ENCODE measurements at regions of chr12 and their contacts with region 1.

Region 1: DNA sequence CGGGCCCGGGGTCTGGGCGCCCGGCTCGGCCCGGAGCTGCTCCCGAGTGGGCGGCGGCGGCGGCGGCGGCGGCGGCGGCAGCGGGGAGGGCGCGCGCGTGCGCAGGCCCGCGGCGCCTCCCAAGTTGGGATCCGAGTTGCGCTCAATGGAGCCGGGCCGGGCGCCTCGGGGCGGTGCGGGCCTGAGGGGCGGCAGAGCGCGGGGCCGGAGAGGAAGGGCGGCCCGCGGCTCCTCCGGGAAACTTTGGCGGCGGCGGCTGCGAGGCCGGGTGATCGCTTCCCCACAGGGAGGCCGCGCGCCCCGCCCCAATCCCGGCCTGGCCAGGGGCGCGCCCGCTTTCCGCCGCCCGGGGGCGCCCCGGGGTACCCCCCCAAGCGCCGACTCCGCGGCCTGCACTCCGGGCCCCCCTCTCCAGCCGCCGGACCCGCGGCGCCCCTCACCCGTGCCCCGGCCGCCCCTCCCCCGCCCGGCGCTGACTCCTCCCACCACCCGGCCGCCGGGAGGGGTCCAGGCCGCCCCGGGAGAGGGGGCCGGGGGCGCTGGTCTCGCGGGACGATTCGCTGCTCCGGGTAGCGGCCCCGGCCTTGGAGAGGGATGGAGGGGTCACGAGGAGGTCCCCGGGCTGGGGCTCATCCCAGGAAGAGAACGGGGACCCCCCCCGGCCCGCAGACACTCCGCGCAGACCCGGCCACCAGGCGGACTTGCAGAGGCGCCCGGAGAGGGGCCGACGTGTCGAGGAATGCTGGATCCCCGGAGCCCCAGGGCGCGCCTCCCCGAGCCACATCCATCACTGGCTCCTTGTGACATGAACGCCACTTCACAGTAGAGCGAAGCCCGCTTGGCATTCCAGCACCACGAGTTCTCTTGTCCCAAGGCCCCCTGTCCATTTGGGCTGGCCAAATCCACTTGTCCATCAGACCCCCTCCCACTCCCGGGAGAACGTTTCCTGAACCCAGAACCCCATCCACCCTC is at the start of gene RILPL1:
- DNase-seq: peak; percentile 7 to 71 (median 43)
- ATAC-seq: peak; percentile 82
- H3K4me3 ChIP-seq: peak within 1 kb of the TSS; percentile 61 to 68
- H3K4me3 Mint-ChIP-seq: peak within 1 kb of the TSS; percentile 89
- H3K27ac ChIP-seq: no peak within 1 kb of the TSS
- H3K27ac Mint-ChIP-seq: peak within 1 kb of the TSS; percentile 74
- H3K4me1 ChIP-seq: peaks cover 19% of the 10 kb centered on the region
- H3K4me1 Mint-ChIP-seq: peaks cover 17% of the 10 kb centered on the region
- H3K27me3 ChIP-seq: no peaks in the 10 kb centered on the region
- H3K27me3 Mint-ChIP-seq: no peaks in the 10 kb centered on the region
- CTCF ChIP-seq: peak; percentile 27
- total RNA-seq, gene RILPL1: 3.1 to 3.4 TPM

Region 2: GRCh38 chr12:123436017-123436964 is 97.7 kb before region 1 on chr12 and contains the start of gene RILPL2:
- CTCF ChIA-PET with region 1: no interaction called
- POLR2A ChIA-PET with region 1: no interaction called
- intact Hi-C with region 1: loop called in 1 of 2 experiments (anchors 5 kb)
- DNase-seq: peak; percentile 77 to 95 (median 90)
- ATAC-seq: peak; percentile 89
- H3K4me3 ChIP-seq: peak within 1 kb of the TSS; percentile 84 to 97
- H3K4me3 Mint-ChIP-seq: peak within 1 kb of the TSS; percentile 93
- H3K27ac ChIP-seq: peak within 1 kb of the TSS; percentile 60 to 93
- H3K27ac Mint-ChIP-seq: peak within 1 kb of the TSS; percentile 90
- H3K4me1 ChIP-seq: peaks cover 35% of the 10 kb centered on the region
- H3K4me1 Mint-ChIP-seq: peaks cover 38% of the 10 kb centered on the region
- H3K27me3 ChIP-seq: no peaks in the 10 kb centered on the region
- H3K27me3 Mint-ChIP-seq: no peaks in the 10 kb centered on the region
- CTCF ChIP-seq: no peak
- total RNA-seq, gene RILPL2: 3.4 to 3.6 TPM

Region 3: GRCh38 chr12:123854918-123855317 is 321.0 kb after region 1 on chr12:
- CTCF ChIA-PET with region 1: no interaction called
- POLR2A ChIA-PET with region 1: no interaction called
- intact Hi-C with region 1: no loop called
- DNase-seq: no peak
- ATAC-seq: no peak
- H3K4me3 ChIP-seq: no peak overlapping the region
- H3K4me3 Mint-ChIP-seq: no peak overlapping the region
- H3K27ac ChIP-seq: no peak overlapping the region
- H3K27ac Mint-ChIP-seq: no peak overlapping the region
- H3K4me1 ChIP-seq: no peaks in the 10 kb centered on the region
- H3K4me1 Mint-ChIP-seq: no peaks in the 10 kb centered on the region
- H3K27me3 ChIP-seq: no peaks in the 10 kb centered on the region
- H3K27me3 Mint-ChIP-seq: no peaks in the 10 kb centered on the region
- CTCF ChIP-seq: no peak

Measured in CD8-positive, alpha-beta T cell (primary cell).